Mammary epithelial cell (primary cell): ENCODE measurements at regions of chr4 and their contacts with region 1.

Region 1: DNA sequence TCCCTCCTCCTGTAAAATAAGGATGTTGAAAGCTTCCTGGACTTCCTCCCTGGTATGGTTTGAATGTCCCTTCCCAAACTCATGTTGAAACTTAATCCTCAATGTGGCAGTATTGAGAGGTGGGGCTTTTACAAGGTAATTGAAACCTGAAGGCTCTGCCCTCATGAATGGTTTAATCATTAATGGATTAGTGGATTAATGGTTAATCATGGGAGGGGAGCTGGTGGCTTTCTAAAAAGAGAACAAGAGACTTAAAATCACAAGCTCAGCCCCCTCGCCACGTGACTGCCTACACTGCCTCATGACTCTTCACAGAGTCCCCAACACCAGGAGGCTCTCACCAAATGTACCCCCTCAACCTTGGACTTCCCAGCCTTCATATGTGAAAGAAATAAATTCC is 124.6 kb upstream of the ANXA3 start:
- DNase-seq: no peak
- H3K4me3 ChIP-seq: no peak overlapping the region
- H3K27ac ChIP-seq: no peak overlapping the region
- H3K4me1 ChIP-seq: no peaks in the 10 kb centered on the region
- H3K27me3 ChIP-seq: no peaks in the 10 kb centered on the region
- CTCF ChIP-seq: no peak

Region 2: DNA sequence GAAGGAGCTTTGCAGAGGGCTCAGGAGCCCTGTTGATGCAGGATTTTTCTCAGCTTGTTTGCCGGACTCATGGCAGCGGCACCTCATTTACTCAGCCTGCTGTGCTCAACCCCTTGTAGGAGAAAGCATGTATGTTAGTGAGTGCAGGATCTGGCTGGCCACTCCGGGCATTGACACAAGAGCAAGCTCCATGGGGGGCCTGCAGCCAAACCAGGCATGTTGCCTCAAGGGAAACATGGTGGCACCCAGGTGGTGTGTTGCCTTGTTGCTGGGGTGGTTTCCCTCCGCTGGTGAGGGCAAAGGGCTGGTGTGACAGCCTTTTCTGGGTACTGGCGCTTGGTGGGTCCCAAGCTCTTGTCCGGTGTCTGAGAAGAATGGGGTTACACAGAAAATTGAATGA is 64.7 kb before region 1 on chr4:
- CTCF ChIA-PET with region 1: no interaction called
- dilution Hi-C with region 1: loop called (anchors 5 kb)
- in situ Hi-C with region 1: no loop called
- intact Hi-C with region 1: no loop called
- DNase-seq: no peak
- H3K4me3 ChIP-seq: no peak overlapping the region
- H3K27ac ChIP-seq: no peak overlapping the region
- H3K4me1 ChIP-seq: no peaks in the 10 kb centered on the region
- H3K27me3 ChIP-seq: no peaks in the 10 kb centered on the region
- CTCF ChIP-seq: no peak

Region 3: GRCh38 chr4:78468279-78468678 is 41.3 kb after region 1 on chr4:
- CTCF ChIA-PET with region 1: no interaction called
- dilution Hi-C with region 1: loop called (anchors 5 kb)
- in situ Hi-C with region 1: no loop called
- intact Hi-C with region 1: no loop called
- DNase-seq: no peak
- H3K4me3 ChIP-seq: no peak overlapping the region
- H3K27ac ChIP-seq: no peak overlapping the region
- H3K4me1 ChIP-seq: no peaks in the 10 kb centered on the region
- H3K27me3 ChIP-seq: no peaks in the 10 kb centered on the region
- CTCF ChIP-seq: no peak